ENCODE measurements at regions of chr12 and their contacts with region 1.

Region 1: GRCh38 chr12:109844983-109845823 is 12.0 kb upstream of the TRPV4 start:
- DNase-seq: peak; percentile 89
- H3K4me3 Mint-ChIP-seq: peak overlapping the region; percentile 53
- H3K27ac Mint-ChIP-seq: no peak overlapping the region
- H3K4me1 Mint-ChIP-seq: peaks cover 10% of the 10 kb centered on the region
- H3K27me3 Mint-ChIP-seq: no peaks in the 10 kb centered on the region

Region 2: DNA sequence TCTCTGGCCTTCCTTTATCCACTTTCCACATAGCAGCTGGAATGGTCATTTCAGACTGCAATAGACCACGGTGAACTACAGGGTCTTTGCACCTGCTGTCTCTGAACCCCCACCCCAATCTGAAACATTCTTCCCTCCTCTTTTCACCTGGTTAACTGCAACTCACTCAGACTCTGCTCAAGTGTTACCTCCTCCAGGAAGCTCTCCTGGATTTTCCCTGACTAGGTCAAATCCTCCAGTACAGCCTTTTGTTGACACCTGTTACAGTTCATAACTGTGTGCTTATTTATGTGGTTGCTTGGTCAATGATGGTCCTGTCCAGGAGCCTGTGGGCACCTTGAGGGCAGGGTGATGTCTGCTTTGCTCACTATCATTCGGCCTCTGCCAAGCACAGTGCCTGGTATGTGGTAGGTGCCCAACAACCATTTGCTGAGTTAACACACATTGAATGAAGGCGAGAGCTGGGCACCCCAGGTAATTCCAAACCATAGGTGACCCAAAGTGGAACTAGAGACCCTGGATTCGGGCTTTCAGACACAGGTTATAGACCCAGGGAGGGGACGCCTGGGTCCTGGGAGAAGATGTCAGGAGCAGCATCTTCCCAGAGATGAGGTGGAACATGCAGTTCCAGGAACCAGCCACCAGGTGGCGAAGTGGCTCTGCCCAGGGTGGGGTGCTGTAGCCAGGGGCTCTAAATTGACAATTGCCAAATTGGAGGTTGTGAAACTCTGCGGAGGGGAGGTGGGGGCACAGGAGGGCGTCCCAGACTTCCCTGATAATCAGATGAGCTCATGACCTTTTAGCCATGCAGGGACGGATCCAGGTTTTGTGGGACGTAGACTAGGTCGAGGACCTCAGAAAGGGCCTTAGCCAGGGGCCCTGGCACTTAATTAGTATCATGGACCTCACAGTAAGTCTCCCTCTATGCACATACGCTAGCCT is 40.1 kb before region 1 on chr12:
- CTCF ChIA-PET with region 1: interaction called, 84 read pairs
- POLR2A ChIA-PET with region 1: no interaction called
- DNase-seq: peak; percentile 70
- H3K4me3 Mint-ChIP-seq: no peak overlapping the region
- H3K27ac Mint-ChIP-seq: no peak overlapping the region
- H3K4me1 Mint-ChIP-seq: no peaks in the 10 kb centered on the region
- H3K27me3 Mint-ChIP-seq: no peaks in the 10 kb centered on the region

Region 3: GRCh38 chr12:109817627-109818231 is 27.5 kb before region 1 on chr12:
- CTCF ChIA-PET with region 1: no interaction called
- POLR2A ChIA-PET with region 1: no interaction called
- DNase-seq: no peak
- H3K4me3 Mint-ChIP-seq: no peak overlapping the region
- H3K27ac Mint-ChIP-seq: no peak overlapping the region
- H3K4me1 Mint-ChIP-seq: no peaks in the 10 kb centered on the region
- H3K27me3 Mint-ChIP-seq: peaks cover 6% of the 10 kb centered on the region

Region 4: DNA sequence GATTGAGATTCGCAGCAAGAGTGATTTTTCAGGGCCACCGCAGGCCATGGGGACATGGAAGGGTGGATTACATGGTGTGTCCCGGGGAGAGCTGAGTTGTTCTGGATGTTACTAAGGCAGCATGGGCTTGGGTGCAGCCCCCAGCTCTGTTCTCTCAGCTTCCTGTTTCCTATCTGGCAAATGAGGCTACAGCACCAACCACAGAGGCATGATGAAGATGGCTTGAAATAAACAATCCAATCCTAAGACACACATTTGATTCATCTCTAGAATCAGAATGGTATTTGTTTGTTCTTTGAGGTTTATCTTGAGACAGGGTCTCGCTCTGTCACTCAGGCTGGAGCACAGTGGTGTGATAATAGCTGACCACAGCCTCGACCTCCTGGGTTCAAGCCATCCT is 13.6 kb after region 1 on chr12:
- CTCF ChIA-PET with region 1: interaction called, 45 read pairs
- POLR2A ChIA-PET with region 1: no interaction called
- DNase-seq: no peak
- H3K4me3 Mint-ChIP-seq: no peak overlapping the region
- H3K27ac Mint-ChIP-seq: no peak overlapping the region
- H3K4me1 Mint-ChIP-seq: peaks cover 18% of the 10 kb centered on the region
- H3K27me3 Mint-ChIP-seq: no peaks in the 10 kb centered on the region

Region 5: GRCh38 chr12:109873670-109874069 is 28.5 kb after region 1 on chr12:
- CTCF ChIA-PET with region 1: interaction called, 14 read pairs
- POLR2A ChIA-PET with region 1: interaction called, 3 read pairs
- DNase-seq: no peak
- H3K4me3 Mint-ChIP-seq: no peak overlapping the region
- H3K27ac Mint-ChIP-seq: no peak overlapping the region
- H3K4me1 Mint-ChIP-seq: peaks cover 38% of the 10 kb centered on the region
- H3K27me3 Mint-ChIP-seq: no peaks in the 10 kb centered on the region

Region 6: GRCh38 chr12:109888179-109889020 is 43.2 kb after region 1 on chr12:
- CTCF ChIA-PET with region 1: interaction called, 14 read pairs
- POLR2A ChIA-PET with region 1: no interaction called
- DNase-seq: peak; percentile 46
- H3K4me3 Mint-ChIP-seq: peak overlapping the region; percentile 55
- H3K27ac Mint-ChIP-seq: peak overlapping the region; percentile 99
- H3K4me1 Mint-ChIP-seq: peaks cover 50% of the 10 kb centered on the region
- H3K27me3 Mint-ChIP-seq: peaks cover 3% of the 10 kb centered on the region

Region 7: DNA sequence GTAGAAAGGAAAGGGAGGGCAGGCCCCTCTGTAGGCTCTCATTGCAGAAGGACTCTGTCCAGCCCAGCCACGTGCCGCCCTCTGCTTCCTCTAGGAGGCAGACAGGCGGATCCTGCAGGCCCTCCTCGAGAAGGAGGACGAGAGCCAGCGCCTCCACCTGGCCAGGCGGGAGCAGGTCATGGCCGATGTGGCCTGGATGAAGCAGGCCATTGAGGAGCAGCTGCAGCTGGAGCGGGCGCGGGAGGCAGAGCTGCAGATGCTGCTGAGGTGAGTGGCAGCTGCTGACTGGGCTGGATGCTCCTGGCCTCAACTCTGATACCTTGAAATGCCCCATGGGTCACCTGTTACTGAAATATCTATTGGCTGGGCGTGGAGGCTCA is 65.8 kb after region 1 on chr12:
- CTCF ChIA-PET with region 1: interaction called, 12 read pairs
- POLR2A ChIA-PET with region 1: interaction called, 3 read pairs
- DNase-seq: no peak
- H3K4me3 Mint-ChIP-seq: no peak overlapping the region
- H3K27ac Mint-ChIP-seq: no peak overlapping the region
- H3K4me1 Mint-ChIP-seq: no peaks in the 10 kb centered on the region
- H3K27me3 Mint-ChIP-seq: no peaks in the 10 kb centered on the region

Measured in activated CD4-positive, alpha-beta memory T cell treated with anti-CD3 and anti-CD28 coated beads, Interleukin-2, amount 10 ng/mL, durations not matched to agents 7 days and 5 days (primary cell).